ENCODE measurements at regions of chr12 and their contacts with region 1.

Region 1: DNA sequence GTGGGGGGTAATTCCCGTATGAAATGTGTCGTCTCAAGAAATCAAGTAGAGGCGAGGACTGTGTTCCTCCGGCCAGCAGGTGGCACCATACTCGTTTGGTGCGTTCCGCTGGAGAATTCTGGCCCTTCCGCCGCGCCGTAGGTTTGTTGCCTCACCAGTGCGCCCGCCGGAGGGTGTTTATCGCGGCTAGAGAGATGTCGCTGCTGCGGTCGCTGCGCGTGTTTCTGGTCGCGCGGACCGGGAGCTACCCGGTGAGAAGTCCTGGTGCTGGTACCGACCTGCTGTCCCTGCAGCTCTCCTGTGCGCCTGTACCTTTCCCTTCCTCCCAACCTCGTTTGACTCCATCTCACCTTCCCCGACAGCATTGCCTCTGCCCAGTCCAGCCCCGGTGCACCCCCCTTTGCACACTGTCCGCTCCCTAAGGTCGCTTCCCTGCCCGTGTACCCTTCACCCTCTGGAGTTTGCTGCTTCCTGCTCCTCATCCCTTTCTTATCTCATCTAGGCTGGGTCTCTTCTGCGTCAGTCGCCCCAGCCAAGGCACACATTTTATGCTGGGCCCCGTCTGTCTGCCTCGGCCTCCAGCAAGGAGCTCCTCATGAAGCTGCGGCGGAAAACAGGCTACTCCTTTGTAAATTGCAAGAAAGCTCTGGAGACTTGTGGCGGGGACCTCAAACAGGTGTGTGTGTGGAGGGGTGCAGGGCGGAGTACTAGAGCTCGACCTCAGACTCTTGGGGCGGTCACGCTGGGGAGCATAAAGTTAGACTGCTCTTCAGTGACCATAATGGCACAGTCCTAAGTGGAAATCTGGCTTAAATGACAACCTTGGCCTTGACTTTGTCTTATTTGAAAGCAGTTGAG is at the start of gene TSFM:
- DNase-seq: peak; percentile 99
- H3K4me3 Mint-ChIP-seq: peak within 1 kb of the TSS; percentile 100
- H3K27ac Mint-ChIP-seq: peak within 1 kb of the TSS; percentile 86
- H3K4me1 Mint-ChIP-seq: peaks cover 29% of the 10 kb centered on the region
- H3K27me3 Mint-ChIP-seq: no peaks in the 10 kb centered on the region
- total RNA-seq, gene TSFM: 32.8 to 34.3 TPM

Region 2: GRCh38 chr12:57590536-57591479 is 192.0 kb before region 1 on chr12 and contains the start of gene PIP4K2C:
- CTCF ChIA-PET with region 1: no interaction called
- intact Hi-C with region 1: no loop called
- DNase-seq: peak; percentile 83
- H3K4me3 Mint-ChIP-seq: peak within 1 kb of the TSS; percentile 82
- H3K27ac Mint-ChIP-seq: peak within 1 kb of the TSS; percentile 73
- H3K4me1 Mint-ChIP-seq: peaks cover 21% of the 10 kb centered on the region
- H3K27me3 Mint-ChIP-seq: no peaks in the 10 kb centered on the region
- total RNA-seq, gene PIP4K2C: 11.8 to 12.7 TPM

Region 3: DNA sequence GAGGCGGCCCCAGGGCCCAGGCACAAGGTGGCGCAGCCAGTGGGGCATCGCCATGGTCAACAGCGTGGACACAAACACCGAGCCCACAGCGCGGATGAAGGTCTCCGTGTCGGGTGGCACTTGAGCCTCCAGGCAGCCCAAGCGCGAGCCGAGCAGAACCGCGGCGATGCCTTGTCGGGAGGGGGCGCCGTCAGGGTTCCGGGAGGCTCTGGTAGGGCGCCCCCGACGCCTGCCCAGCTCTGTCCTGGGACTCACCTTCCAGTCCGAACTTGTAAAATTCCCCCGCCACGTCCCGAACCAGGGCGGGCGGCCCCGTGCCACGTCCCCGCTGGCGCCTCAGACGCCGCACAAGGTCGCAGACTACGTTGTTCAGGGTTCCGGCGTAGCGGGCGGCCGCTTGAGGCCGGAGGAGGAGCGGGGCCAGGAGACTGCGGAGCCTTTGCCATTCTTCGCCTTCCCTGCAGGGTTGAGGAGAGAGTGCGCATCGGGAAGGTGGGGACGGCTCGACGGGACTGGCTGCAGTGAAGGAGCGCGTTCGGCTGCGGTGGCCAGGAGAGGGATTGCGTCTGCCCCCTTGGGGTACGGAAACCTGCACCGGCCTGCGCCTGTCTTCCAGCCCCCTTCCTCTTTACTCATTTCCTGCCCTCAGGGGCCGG is 17.7 kb before region 1 on chr12:
- CTCF ChIA-PET with region 1: interaction called, 6 read pairs
- intact Hi-C with region 1: loop called (anchors 2 kb)
- DNase-seq: peak; percentile 80
- H3K4me3 Mint-ChIP-seq: peak overlapping the region; percentile 88
- H3K27ac Mint-ChIP-seq: peak overlapping the region; percentile 63
- H3K4me1 Mint-ChIP-seq: peaks cover 30% of the 10 kb centered on the region
- H3K27me3 Mint-ChIP-seq: peaks cover 6% of the 10 kb centered on the region

Region 4: GRCh38 chr12:57771708-57772428 is 11.0 kb before region 1 on chr12 and contains the start of gene METTL1:
- CTCF ChIA-PET with region 1: interaction called, 7 read pairs
- intact Hi-C with region 1: loop called (anchors 1 kb)
- DNase-seq: peak; percentile 97
- H3K4me3 Mint-ChIP-seq: peak within 1 kb of the TSS; percentile 98
- H3K27ac Mint-ChIP-seq: peak within 1 kb of the TSS; percentile 95
- H3K4me1 Mint-ChIP-seq: peaks cover 26% of the 10 kb centered on the region
- H3K27me3 Mint-ChIP-seq: peaks cover 2% of the 10 kb centered on the region
- total RNA-seq, gene METTL1: 17.3 to 20.4 TPM

Region 5: DNA sequence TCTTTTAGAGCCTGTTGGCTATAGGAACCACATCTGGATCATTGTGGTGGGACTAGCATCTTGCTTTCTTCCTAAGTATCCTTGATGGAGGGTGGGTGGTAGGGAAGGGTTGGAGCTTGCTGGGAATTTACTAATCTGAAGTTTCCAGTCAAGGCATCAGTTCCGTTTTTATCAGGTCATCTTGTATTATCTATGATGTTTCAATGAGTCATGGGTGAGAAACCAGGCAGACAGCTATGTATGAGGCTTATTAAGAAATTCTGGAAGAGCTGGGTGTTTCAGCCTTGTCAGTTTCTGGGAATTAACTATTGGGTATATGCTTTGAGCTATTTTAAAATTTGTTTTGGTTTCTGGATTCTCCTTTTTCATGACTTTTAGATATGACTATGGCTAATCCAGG is 11.1 kb after region 1 on chr12:
- CTCF ChIA-PET with region 1: interaction called, 20 read pairs
- intact Hi-C with region 1: no loop called
- DNase-seq: no peak
- H3K4me3 Mint-ChIP-seq: no peak overlapping the region
- H3K27ac Mint-ChIP-seq: peak overlapping the region; percentile 76
- H3K4me1 Mint-ChIP-seq: peaks cover 13% of the 10 kb centered on the region
- H3K27me3 Mint-ChIP-seq: no peaks in the 10 kb centered on the region

Region 6: DNA sequence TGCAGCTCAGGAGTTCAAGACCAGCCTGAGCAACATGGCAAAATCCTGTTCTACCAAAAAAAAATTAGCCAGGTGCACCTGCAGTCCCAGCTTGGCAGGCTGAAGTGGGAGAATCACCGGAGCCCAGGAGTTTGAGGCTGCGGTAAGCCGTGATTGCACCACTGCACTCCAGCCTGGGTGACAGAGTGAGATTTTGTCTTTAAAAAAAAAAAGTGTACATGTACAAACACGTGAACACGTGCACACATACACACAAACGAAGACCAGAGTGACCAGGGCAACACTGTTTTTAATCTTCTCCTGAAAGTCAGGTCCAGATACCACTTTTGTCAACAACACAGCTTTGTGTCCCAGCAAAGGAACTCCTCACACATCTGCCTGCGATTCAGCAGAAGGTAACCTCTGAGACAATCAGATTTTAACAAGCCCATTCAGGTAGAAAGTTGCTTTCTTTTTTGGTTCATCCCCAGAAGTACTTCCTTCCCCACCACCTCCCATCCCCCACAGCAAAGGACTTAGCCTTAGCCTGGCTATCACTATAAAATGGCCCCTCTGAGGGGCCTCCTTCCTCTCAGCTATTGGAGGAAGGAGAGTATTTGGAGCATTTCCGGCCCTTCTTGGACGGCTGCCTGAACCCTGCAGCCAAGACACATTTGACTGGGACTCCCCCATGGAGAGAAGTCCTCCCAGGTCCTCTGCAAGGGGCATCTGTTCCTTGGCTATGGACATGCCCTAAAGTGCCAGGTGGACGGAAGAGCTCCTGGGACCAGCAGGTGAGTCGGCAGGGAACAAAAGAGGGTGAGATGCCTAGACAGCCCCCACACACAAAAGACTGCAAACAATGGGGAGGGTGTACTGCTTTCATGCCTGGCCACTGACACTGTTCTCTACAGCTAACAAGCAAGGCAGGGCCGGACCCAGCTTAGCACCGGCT is 53.9 kb after region 1 on chr12:
- CTCF ChIA-PET with region 1: interaction called, 10 read pairs
- intact Hi-C with region 1: loop called (anchors 1 kb)
- DNase-seq: peak; percentile 81
- H3K4me3 Mint-ChIP-seq: peak overlapping the region; percentile 40
- H3K27ac Mint-ChIP-seq: peak overlapping the region; percentile 89
- H3K4me1 Mint-ChIP-seq: peaks cover 97% of the 10 kb centered on the region
- H3K27me3 Mint-ChIP-seq: no peaks in the 10 kb centered on the region

Region 7: DNA sequence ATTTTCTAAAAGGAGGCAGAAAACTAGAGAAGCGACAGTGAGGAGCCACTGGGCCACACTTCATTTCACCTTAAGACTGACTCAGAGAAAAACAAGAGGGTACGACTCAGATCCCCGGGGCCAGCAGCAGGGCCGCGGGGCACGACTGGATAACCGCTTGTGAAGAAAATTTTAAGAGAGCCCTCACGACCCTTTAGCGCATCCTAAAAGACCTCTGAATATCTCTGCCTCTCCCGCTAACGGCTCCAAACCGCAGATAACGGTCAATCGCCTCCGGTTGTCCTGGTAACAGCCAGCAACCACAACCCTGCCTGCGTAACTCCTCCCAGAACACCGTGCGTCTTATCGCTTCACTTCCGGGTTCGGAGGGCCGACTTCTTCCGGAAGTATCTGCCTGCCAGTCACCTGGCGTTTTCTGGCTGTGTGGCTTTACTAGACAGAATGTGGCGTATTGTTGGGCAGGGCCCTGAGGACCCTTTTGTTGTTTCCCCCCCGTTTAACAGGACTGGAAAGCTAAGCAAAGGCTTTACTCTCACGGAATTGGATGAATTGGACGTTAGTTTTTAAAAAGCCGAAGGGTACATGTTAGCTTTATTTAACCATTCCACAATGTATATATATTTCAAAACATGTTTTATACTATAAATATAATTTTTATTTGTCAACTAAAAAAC is 153.1 kb after region 1 on chr12:
- CTCF ChIA-PET with region 1: no interaction called
- intact Hi-C with region 1: loop called (anchors 1 kb)
- DNase-seq: peak; percentile 96
- H3K4me3 Mint-ChIP-seq: peak overlapping the region; percentile 96
- H3K27ac Mint-ChIP-seq: peak overlapping the region; percentile 96
- H3K4me1 Mint-ChIP-seq: peaks cover 23% of the 10 kb centered on the region
- H3K27me3 Mint-ChIP-seq: no peaks in the 10 kb centered on the region